Heart right ventricle (tissue), 16 donors: ENCODE measurements at regions of chr6 and their contacts with region 1.

Region 1: DNA sequence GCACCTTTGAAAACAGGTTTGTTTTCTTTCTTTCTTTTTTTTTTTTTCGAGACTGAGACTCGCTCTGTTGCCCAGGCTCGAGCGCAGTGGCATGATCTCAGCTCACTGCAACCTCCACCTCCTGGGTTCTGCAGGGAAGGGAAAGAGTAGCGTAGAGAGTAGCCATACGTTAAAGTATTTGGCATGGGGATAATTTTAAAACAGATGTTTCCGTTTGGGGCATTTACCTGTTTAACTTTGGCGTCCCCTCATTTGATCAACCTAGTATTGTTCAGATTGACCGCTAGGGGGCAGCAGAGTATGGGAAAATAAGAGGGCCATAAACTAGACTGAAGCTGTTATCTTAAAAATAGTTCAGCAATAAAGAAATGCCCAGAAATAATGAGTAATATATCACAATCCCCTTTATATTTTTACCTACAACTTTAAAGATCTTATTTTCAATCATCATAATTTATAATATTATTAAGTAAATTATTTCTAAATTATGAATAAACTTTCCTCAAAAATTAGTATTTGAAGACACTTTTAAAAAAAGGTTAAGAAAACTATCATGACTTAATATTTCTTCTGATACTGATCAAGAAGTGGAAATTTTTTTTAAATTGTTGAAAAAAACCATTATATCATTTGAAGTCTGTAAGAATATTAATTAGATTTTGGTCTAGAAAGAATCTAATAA is 7.6 kb upstream of the TAAR9 start:
- DNase-seq: peak in 1 of 2 donors; percentile 61
- ATAC-seq: peak in 6 of 8 donors; percentile 64 to 77 (median 73)
- H3K4me3 ChIP-seq: no peak overlapping the region
- H3K27ac ChIP-seq: no peak overlapping the region
- H3K4me1 ChIP-seq: no peaks in the 10 kb centered on the region
- H3K27me3 ChIP-seq: peaks cover 0 to 22% (median 6%) of the 10 kb centered on the region in 7 donors
- CTCF ChIP-seq: peak; percentile 69 to 90 (median 88)

Region 2: DNA sequence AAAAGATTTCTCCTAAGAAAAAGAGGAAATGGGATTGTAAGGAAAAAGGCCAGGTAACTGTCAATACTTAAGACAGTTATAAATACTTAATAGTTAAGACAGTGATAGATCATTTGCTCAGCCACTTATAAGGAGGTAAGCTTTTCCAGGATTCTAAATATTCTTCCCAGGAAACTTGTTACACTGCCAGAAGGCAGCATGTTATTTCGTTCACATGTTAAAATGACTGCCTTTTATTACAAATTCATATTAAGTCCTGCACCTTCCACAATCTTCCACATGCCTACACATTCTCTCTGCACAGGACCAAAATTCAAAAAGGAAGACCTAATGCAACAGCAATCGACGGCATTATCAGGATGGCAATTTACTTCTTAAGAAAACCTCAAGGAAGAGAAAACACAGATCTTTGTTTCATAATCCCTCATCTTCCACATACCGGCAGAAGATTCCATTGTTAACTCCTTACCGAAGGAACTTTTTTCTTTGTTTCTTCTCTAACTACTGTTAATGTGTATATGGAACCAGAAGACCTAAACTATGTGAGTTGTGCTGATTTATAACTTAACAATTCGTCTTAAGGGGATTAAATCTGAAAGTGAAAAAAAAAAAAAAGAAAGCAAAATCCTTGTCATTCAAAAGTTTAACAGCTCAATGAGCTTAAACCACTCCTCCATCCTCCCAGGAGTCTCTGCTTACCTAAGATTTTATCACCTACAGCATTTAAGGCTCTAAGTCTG is 92.8 kb after region 1 on chr6:
- intact Hi-C with region 1: no loop called
- DNase-seq: no peak
- ATAC-seq: no peak
- H3K4me3 ChIP-seq: no peak overlapping the region
- H3K27ac ChIP-seq: no peak overlapping the region
- H3K4me1 ChIP-seq: no peaks in the 10 kb centered on the region
- H3K27me3 ChIP-seq: peaks cover 0 to 22% (median 0%) of the 10 kb centered on the region in 7 donors
- CTCF ChIP-seq: no peak

Region 3: DNA sequence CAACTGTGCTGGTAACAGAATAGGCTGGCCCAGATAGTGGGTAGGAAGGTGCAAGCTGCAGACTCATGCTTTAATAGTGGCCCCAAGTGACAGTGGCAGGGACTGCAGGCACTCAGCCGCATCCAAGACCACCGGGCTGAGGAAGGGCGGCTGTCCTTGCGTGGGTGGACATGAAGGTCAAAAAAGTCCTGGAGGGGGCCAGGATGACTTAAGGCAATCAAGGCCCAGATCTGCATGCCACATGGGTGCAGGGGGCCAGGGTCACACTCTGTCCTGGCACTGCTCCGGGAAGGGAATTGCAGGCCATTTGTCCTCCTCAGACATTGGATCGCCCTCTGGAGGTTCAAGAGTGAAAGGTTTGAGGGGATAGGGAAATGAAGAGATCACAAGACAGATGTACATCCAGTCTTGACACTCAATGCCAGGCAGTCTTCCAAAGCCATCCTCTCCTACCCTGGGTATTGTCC is 237.7 kb after region 1 on chr6:
- intact Hi-C with region 1: loop called in 6 of 10 experiments (anchors 5 to 10 kb)
- DNase-seq: peak; percentile 7 to 25
- ATAC-seq: peak; percentile 76 to 88 (median 84)
- H3K4me3 ChIP-seq: no peak overlapping the region
- H3K27ac ChIP-seq: no peak overlapping the region
- H3K4me1 ChIP-seq: peaks cover 0 to 17% (median 0%) of the 10 kb centered on the region in 9 donors
- H3K27me3 ChIP-seq: no peaks in the 10 kb centered on the region
- CTCF ChIP-seq: peak in 7 of 9 donors; percentile 41 to 69 (median 57)

Region 4: DNA sequence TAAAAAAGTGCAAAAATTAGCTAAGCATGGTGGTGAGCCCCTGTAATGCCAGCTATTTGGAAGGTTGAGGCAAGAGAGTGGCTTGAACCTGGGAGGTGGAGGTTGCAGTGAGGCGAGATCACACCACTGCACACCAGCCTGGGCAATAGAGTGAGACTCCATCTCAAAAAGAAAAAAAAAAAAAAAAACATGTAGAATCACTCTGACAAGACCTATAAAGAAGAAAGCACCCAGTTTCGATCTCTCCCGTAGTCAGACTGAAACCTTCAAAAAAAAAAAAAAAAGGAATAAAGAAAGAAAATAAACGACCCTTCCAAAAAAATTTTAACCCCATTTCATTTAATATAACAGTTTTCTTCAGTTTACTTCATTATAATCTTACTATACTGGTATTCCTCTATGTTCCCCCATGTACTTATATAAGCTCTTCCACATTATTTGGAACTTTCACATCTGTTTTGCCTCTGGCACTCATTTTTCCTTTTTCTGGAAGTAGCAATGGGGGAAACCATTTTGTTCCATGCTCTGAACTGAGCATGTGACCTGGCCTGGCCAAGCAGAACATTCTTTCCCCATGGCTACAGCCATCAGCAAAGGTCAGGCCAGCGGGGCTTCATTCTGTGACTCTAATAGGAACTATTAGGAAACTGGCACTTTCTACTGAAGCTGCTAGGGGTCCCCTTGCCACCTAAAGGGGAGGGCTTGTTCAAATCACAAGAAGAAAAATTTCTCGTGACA is 258.4 kb after region 1 on chr6:
- intact Hi-C with region 1: loop called in 2 of 10 experiments (anchors 5 to 10 kb)
- DNase-seq: no peak
- ATAC-seq: no peak
- H3K4me3 ChIP-seq: no peak overlapping the region
- H3K27ac ChIP-seq: no peak overlapping the region
- H3K4me1 ChIP-seq: peaks cover 0 to 29% (median 0%) of the 10 kb centered on the region in 9 donors
- H3K27me3 ChIP-seq: no peaks in the 10 kb centered on the region
- CTCF ChIP-seq: no peak

Region 5: DNA sequence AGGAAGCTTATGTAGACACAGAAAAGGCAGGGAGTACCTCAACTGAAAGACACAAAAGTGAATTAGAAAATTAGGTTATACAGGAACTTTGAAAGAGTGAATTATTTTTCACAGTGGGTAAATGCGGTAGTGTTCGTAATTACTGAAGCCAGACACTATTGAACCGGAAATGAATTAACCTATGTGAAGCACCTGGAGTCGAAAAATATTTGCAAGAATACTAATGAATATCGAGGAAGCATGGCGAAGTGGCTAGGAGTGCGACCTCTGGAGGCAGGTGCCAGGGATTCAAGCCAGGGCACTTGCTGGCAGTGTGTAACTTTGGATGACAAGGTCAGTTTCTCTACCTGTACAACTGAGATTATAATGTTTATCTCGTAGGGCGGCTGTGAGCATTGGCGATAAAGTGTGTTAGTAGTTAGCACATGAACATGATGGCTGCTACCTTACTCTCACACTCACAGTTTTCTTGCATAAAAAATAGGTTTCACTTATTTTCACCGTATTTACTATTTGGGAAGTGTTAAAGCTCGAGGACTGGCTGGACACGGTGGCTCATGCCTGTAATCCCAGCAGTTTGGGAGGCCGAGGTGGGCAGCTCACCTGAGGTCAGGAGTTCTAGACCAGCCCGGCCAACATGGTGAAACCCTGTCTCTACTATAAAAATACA is 268.6 kb after region 1 on chr6:
- intact Hi-C with region 1: loop called in 2 of 10 experiments (anchors 2 to 10 kb)
- DNase-seq: peak; percentile 63 to 66
- ATAC-seq: peak; percentile 75 to 94 (median 89)
- H3K4me3 ChIP-seq: peak overlapping the region; percentile 72 to 97 (median 83)
- H3K27ac ChIP-seq: peak overlapping the region in 9 of 10 donors; percentile 1 to 78 (median 67)
- H3K4me1 ChIP-seq: peaks cover 0 to 13% (median 7%) of the 10 kb centered on the region in 9 donors
- H3K27me3 ChIP-seq: no peaks in the 10 kb centered on the region
- CTCF ChIP-seq: peak; percentile 57 to 88 (median 75)